Breast epithelium (tissue), 4 donors: ENCODE measurements at regions of chr6 and their contacts with region 1.

Region 1: DNA sequence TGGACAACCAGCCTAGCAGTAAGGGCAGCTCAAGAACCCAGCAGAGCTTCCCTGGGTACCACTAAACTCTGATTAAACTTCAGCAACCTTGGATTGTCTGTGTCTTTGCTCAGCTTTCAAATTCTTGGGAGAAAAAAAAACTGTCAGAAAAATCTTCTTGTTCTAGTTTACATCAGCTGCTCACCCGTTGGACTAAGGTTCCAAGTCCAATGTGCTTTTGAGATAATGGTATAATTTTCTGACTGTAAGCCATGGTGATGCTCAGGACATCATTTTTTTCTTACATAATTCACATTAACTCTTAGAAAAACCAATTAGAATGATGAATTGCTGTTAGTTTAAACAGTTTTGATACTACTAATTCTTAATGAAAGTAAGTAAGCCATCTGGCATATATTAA is 145.8 kb downstream of the COL9A1 start:
- DNase-seq: no peak
- H3K4me3 ChIP-seq: no peak overlapping the region
- H3K27ac ChIP-seq: no peak overlapping the region
- H3K4me1 ChIP-seq: no peaks in the 10 kb centered on the region
- H3K27me3 ChIP-seq: no peaks in the 10 kb centered on the region
- CTCF ChIP-seq: no peak
- POLR2A ChIP-seq: no peak

Region 2: DNA sequence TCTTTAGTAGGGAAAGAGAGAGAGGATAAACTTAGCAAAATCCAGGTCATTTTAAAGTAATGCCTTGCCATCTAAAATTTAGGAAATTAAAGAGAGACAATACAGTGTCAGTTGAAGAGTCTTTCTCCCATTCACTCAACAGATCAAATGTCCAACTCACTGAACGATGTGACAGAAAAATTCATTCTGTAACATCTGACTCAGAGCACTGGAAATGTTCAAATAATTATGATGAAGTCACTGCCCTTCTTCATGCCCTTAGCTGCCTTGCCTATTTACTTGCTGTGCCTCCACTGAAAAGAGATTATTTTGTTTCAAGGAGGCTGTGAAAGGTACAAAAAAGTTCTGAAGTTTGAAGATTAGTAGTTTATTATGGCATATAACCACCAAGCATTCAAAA is 1087.2 kb before region 1 on chr6:
- intact Hi-C with region 1: loop called (anchors 5 kb)
- DNase-seq: no peak
- H3K4me3 ChIP-seq: no peak overlapping the region
- H3K27ac ChIP-seq: no peak overlapping the region
- H3K4me1 ChIP-seq: no peaks in the 10 kb centered on the region
- H3K27me3 ChIP-seq: no peaks in the 10 kb centered on the region
- CTCF ChIP-seq: no peak
- POLR2A ChIP-seq: no peak